ENCODE measurements at regions of chr9 and their contacts with region 1.

Region 1: GRCh38 chr9:95875305-95876137 is at the start of gene ERCC6L2:
- DNase-seq: peak; percentile 99
- ATAC-seq: peak; percentile 88
- H3K4me3 ChIP-seq: no peak within 1 kb of the TSS
- H3K27ac ChIP-seq: peak within 1 kb of the TSS; percentile 87
- H3K4me1 ChIP-seq: peaks cover 2% of the 10 kb centered on the region
- H3K27me3 ChIP-seq: no peaks in the 10 kb centered on the region
- CTCF ChIP-seq: no peak
- POLR2A ChIP-seq: peak; percentile 96
- RAD21 ChIP-seq: peak; percentile 2; the same call in 1 of the 2 replicates
- total RNA-seq, gene ERCC6L2: 67.6 and 83.3 TPM in 2 replicates

Region 2: DNA sequence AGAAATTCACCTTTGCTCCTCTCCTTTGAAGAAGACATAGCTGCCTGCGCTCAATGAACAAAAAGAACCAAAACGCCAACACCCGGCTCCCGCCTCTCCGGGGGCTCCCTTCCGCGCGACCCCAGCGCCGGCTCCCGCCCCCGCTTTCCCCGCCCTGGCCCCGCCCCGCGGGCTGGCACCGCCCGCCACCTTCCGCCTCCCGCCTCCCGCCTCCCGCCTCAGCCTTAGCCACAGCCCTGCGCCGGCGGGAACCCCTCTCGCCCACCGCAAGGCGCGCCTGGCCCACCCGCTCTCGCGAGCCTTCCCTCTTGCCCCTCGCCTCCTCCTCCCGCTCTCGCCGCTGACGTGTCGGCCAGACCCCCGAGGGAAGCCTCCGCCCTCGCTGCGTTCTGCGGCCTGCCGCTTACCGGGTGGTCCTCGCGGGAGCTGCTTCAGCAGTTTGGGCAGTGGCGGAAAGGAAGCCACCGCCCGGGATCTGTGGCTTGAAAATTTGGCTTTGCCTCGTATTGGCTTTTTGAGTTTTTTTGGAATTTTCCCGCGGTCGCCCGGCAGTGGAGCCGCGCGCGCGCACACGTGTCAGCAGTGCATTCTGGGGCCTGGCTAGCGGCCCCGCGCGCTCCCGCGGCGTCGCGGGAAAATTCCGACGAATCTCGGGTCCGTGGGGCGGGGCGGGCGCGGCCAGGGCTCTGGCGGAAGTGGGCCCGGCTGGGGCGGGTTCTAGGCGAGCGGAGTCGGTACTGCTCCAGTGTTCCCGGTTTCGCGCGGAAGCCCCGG is 558.2 kb before region 1 on chr9 and contains the start of gene FANCC:
- CTCF ChIA-PET with region 1: no interaction called
- POLR2A ChIA-PET with region 1: no interaction called
- dilution Hi-C with region 1: no loop called
- in situ Hi-C with region 1: no loop called
- intact Hi-C with region 1: loop called (anchors 5 kb)
- DNase-seq: peak; percentile 86
- ATAC-seq: peak; percentile 92
- H3K4me3 ChIP-seq: peak within 1 kb of the TSS; percentile 99
- H3K27ac ChIP-seq: peak within 1 kb of the TSS; percentile 100
- H3K4me1 ChIP-seq: peaks cover 2% of the 10 kb centered on the region; the same call in 1 of the 2 replicates
- H3K27me3 ChIP-seq: no peaks in the 10 kb centered on the region
- CTCF ChIP-seq: no peak
- POLR2A ChIP-seq: peak; percentile 86
- RAD21 ChIP-seq: no peak
- total RNA-seq, gene FANCC: 6.3 and 6.4 TPM in 2 replicates

Region 3: DNA sequence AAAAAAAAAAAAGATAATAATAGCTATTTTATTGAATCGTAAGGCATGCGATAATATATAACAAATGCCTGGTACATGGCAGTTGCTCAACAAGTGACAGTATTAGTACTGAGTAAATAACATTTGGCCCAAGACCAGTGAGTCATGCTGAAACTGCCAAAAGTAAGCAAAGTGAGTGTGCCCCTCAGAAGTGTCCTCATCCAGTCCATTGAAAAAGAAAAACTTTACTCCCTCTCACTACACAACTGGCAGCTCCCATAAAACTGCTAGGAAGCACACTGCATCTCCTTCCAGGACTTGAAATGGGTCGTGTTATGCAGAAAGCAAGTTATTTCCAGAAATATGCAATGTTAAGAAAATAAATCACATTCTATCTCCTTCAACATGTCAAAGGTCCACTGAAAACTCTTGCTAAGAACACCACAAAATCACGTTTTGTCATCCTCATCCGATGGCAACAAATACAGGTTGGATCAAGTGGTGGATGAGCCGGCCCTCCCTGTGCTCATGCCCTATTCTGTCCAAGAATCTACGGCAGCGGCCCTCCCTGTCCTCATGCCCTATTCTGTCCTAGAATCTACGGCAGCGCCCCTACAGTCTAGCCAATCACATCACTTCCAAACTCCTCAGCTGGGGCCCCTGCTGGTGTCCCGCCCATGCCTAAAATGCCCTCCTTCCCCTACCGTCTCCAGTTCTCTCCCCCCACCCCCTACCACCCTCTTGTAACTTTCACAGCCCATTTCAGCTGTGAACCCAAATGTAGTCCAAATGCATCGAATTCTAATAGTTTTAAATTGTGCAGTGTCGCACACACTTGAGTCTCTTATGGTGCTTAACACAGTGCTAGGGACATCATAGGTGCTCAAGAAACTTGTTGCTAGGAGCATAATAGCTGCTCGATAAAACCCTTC is 371.2 kb before region 1 on chr9:
- CTCF ChIA-PET with region 1: no interaction called
- POLR2A ChIA-PET with region 1: no interaction called
- dilution Hi-C with region 1: no loop called
- in situ Hi-C with region 1: no loop called
- intact Hi-C with region 1: no loop called
- DNase-seq: peak; percentile 72
- ATAC-seq: no peak
- H3K4me3 ChIP-seq: no peak overlapping the region
- H3K27ac ChIP-seq: no peak overlapping the region
- H3K4me1 ChIP-seq: peaks cover 11% of the 10 kb centered on the region
- H3K27me3 ChIP-seq: no peaks in the 10 kb centered on the region
- CTCF ChIP-seq: no peak
- POLR2A ChIP-seq: no peak
- RAD21 ChIP-seq: no peak

Region 4: DNA sequence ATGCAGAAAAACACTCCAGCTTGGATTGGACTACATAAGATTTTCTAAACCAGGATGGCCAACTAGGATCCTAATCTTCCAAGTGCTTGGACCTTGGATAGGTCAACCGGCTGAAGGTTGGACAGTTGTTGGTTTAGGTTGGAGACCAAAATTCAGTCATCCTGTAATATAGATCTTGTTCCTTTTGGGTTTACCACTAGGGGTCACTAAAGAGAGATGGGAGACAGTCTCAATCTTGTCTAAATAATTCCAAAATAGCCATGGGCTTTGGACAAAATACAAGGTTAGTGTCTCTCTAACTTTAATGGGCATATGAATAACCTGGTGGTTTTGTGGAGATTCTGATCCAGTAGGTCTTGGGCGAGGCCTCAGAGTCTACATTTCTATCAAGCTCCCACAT is 148.8 kb before region 1 on chr9:
- CTCF ChIA-PET with region 1: no interaction called
- POLR2A ChIA-PET with region 1: no interaction called
- dilution Hi-C with region 1: no loop called
- in situ Hi-C with region 1: no loop called
- intact Hi-C with region 1: loop called (anchors 2 kb)
- DNase-seq: peak; percentile 59
- ATAC-seq: peak; percentile 89
- H3K4me3 ChIP-seq: no peak overlapping the region
- H3K27ac ChIP-seq: no peak overlapping the region
- H3K4me1 ChIP-seq: peaks cover 2% of the 10 kb centered on the region; the same call in 1 of the 2 replicates
- H3K27me3 ChIP-seq: peaks cover 15% of the 10 kb centered on the region
- CTCF ChIP-seq: peak; percentile 69
- POLR2A ChIP-seq: no peak
- RAD21 ChIP-seq: peak; percentile 74

Region 5: GRCh38 chr9:95772320-95773052 is 103.0 kb before region 1 on chr9:
- CTCF ChIA-PET with region 1: no interaction called
- POLR2A ChIA-PET with region 1: no interaction called
- dilution Hi-C with region 1: no loop called
- in situ Hi-C with region 1: no loop called
- intact Hi-C with region 1: loop called (anchors 5 kb)
- DNase-seq: peak; percentile 65
- ATAC-seq: peak; percentile 90
- H3K4me3 ChIP-seq: no peak overlapping the region
- H3K27ac ChIP-seq: peak overlapping the region; percentile 51; the same call in 1 of the 2 replicates
- H3K4me1 ChIP-seq: peaks cover 24% of the 10 kb centered on the region
- H3K27me3 ChIP-seq: peaks cover 26% of the 10 kb centered on the region
- CTCF ChIP-seq: no peak
- POLR2A ChIP-seq: no peak
- RAD21 ChIP-seq: 0 out of 2 replicates have a peak, but pooled peaks have one; percentile 9

Region 6: DNA sequence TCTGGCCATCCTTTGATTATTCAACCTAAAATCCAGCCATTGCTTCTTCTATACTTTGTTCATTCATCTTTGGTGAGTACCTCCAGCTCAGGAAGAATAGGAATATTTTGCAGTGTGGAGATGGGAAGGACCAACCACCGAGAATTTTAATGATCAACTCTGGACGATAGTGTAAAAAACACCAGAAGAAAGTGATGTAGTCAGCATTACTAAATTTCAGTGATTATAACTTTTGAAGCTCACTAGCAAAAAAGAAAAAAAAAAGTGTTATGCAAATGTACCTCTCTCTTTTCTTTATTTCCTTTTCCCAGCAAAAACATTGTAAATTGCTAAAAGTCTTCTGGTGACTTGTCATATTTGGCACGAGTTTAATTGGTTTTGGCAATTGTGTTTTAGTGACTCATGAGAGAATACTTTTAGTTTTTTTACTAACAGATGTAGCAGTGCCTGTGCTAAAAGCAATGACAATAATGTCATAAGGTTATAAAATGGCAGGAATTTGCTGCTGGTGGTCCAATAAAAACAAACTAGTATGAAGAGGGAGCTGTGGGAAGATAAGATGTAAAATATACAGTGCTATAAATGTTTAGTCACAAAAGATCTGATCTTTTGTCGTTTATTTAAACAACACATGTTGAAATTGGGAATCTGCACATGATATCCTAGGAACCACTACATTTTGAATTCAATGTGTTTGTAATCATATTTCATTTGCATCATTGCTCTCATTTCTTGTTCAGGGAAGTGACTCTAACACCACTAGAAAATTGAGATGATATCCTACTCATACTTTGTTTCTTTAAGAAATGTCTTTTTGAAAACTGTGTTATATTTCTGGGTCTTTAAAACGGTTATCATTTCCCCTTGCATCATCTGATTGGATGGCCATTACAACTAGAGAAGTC is 81.3 kb before region 1 on chr9:
- CTCF ChIA-PET with region 1: no interaction called
- POLR2A ChIA-PET with region 1: no interaction called
- dilution Hi-C with region 1: no loop called
- in situ Hi-C with region 1: no loop called
- intact Hi-C with region 1: loop called (anchors 1 kb)
- DNase-seq: peak; percentile 98
- ATAC-seq: peak; percentile 95
- H3K4me3 ChIP-seq: no peak overlapping the region
- H3K27ac ChIP-seq: peak overlapping the region; percentile 97; the same call in 1 of the 2 replicates
- H3K4me1 ChIP-seq: peaks cover 9% of the 10 kb centered on the region
- H3K27me3 ChIP-seq: peaks cover 19% of the 10 kb centered on the region
- CTCF ChIP-seq: no peak
- POLR2A ChIP-seq: no peak
- RAD21 ChIP-seq: no peak

Region 7: GRCh38 chr9:95808011-95808410 is 67.5 kb before region 1 on chr9:
- CTCF ChIA-PET with region 1: no interaction called
- POLR2A ChIA-PET with region 1: interaction called, 3 read pairs
- dilution Hi-C with region 1: no loop called
- in situ Hi-C with region 1: no loop called
- intact Hi-C with region 1: loop called (anchors 5 kb)
- DNase-seq: peak; percentile 48
- ATAC-seq: peak; percentile 35
- H3K4me3 ChIP-seq: no peak overlapping the region
- H3K27ac ChIP-seq: no peak overlapping the region
- H3K4me1 ChIP-seq: peaks cover 5% of the 10 kb centered on the region
- H3K27me3 ChIP-seq: peaks cover 7% of the 10 kb centered on the region; the same call in 1 of the 2 replicates
- CTCF ChIP-seq: no peak
- POLR2A ChIP-seq: no peak
- RAD21 ChIP-seq: no peak

Region 8: GRCh38 chr9:95901506-95901905 is 26.0 kb after region 1 on chr9:
- CTCF ChIA-PET with region 1: no interaction called
- POLR2A ChIA-PET with region 1: no interaction called
- dilution Hi-C with region 1: no loop called
- in situ Hi-C with region 1: no loop called
- intact Hi-C with region 1: no loop called
- DNase-seq: no peak
- ATAC-seq: no peak
- H3K4me3 ChIP-seq: no peak overlapping the region
- H3K27ac ChIP-seq: no peak overlapping the region
- H3K4me1 ChIP-seq: no peaks in the 10 kb centered on the region
- H3K27me3 ChIP-seq: no peaks in the 10 kb centered on the region
- CTCF ChIP-seq: no peak
- POLR2A ChIP-seq: no peak
- RAD21 ChIP-seq: no peak

Measured in IMR-90 (cell line).